ENCODE measurements at regions of chrX and their contacts with region 1.

Region 1: DNA sequence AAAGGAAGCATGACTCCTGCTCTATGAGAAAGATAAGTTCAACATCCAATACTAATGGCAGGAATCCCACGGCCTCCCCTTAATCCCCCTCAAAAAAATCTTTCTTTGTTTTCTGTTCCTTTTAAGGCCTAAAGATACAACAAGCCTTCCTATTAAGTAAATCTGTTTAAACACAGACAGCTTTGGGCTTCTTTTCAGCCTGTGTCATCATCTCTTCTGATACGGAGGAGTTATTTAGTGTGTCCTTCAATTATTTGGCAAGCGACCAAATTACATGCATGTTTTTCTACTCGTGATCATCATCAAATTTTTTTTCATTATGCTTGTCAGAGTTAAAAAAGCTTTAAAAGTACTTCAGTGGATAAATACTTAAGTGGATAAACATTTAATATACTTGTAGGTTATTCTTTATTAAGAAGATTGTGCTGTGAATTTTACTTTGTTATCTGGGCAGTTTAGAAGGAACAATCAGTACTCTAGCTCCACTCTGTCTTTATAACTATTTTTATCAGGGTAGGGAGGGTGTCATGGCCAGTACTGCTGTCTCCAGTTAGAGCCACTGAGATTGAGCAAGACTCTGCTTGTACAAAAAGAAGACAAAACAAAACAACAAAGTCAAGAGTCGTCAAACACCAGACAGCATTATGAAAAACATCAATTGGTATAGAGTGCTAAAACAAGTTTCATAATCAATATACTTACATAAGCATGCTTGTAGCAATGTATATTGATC is 210.7 kb downstream of the PRR32 start:
- DNase-seq: peak in 1 of 5 donors; percentile 16
- ATAC-seq: peak; percentile 93 to 99 (median 94)
- H3K4me3 ChIP-seq: no peak overlapping the region
- H3K27ac ChIP-seq: peak overlapping the region in 11 of 12 donors; percentile 19 to 71 (median 46)
- H3K4me1 ChIP-seq: peaks cover 0 to 6% (median 0%) of the 10 kb centered on the region in 12 donors
- H3K27me3 ChIP-seq: no peaks in the 10 kb centered on the region
- CTCF ChIP-seq: no peak
- POLR2A ChIP-seq: no peak

Region 2: DNA sequence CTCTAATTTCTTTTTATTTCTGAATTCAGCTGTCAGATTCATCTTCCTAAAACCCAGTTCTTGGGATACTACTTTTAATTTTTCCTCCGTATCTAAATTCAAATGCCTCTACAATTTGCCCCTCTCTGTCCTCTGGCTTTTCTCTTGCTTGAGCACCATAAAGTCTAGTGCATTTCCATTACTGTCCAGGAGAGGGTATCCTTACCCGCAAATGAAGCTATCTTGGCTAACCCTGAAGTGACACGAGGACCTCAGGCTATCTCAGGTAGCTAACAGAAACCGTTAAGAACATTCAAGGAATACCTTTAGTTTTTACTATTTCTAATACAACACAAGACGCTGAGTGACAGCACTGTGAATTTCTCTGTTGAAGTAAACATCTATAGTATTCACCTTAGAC is 260.0 kb before region 1 on chrX:
- intact Hi-C with region 1: loop called in 7 of 10 experiments (anchors 5 to 10 kb)
- DNase-seq: no peak
- ATAC-seq: peak in 1 of 4 donors; percentile 48
- H3K4me3 ChIP-seq: no peak overlapping the region
- H3K27ac ChIP-seq: no peak overlapping the region
- H3K4me1 ChIP-seq: no peaks in the 10 kb centered on the region
- H3K27me3 ChIP-seq: no peaks in the 10 kb centered on the region
- CTCF ChIP-seq: peak in 11 of 12 donors; percentile 19 to 54 (median 41)
- POLR2A ChIP-seq: no peak

Region 3: DNA sequence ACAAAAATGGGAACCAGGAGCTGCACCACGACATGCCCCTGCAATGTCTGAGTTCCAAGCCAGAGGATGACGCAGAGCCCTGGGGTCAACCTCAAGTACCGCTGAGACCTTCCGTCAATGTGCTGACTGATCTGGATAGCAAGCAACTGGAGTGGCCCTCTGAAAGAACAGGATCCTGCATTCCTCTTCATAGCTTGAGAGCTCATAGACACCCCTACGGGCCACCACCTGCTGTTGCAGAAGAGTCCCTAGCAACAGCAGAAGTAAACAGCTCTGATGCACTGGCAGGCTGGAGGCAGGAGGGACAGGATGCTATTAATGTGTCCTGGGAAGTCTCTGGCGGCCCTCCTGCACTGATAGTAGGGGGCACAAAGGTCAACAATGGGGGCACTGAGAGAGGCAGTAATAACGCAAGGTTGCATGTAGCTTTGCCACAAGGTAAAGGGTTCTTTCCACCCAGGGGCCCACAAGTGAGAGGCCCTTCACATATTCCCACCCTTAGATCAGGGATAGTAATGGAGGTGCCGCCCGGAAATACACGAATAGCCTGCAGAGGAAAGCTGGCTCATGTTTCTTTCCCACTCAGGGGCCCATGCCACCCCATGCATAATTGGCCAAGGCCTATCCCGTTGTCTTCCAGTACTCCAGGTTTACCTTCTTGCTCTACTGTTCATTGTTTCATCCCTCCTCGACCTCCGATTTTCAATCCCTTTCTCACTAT is 209.3 kb before region 1 on chrX:
- intact Hi-C with region 1: loop called in 2 of 10 experiments (anchors 2 to 5 kb)
- DNase-seq: peak in 4 of 5 donors; percentile 40 to 80 (median 54)
- ATAC-seq: peak; percentile 93 to 97 (median 97)
- H3K4me3 ChIP-seq: no peak overlapping the region
- H3K27ac ChIP-seq: peak overlapping the region in 3 of 12 donors; percentile 30 to 68 (median 57)
- H3K4me1 ChIP-seq: no peaks in the 10 kb centered on the region
- H3K27me3 ChIP-seq: no peaks in the 10 kb centered on the region
- CTCF ChIP-seq: peak in 1 of 12 donors; percentile 7
- POLR2A ChIP-seq: no peak

Region 4: GRCh38 chrX:126985981-126986380 is 44.2 kb before region 1 on chrX:
- intact Hi-C with region 1: loop called in 1 of 10 experiments (anchors 5 kb)
- DNase-seq: no peak
- ATAC-seq: no peak
- H3K4me3 ChIP-seq: no peak overlapping the region
- H3K27ac ChIP-seq: no peak overlapping the region
- H3K4me1 ChIP-seq: no peaks in the 10 kb centered on the region
- H3K27me3 ChIP-seq: no peaks in the 10 kb centered on the region
- CTCF ChIP-seq: no peak
- POLR2A ChIP-seq: no peak